Activated CD4-positive, alpha-beta memory T cell treated with anti-CD3 and anti-CD28 coated beads, Interleukin-2, amount 10 ng/mL, durations not matched to agents 7 days and 5 days (primary cell): ENCODE measurements at regions of chr1 and their contacts with region 1.

Region 1: GRCh38 chr1:184854496-184855140 is 100.0 kb upstream of the EDEM3 start:
- DNase-seq: no peak
- H3K4me3 Mint-ChIP-seq: no peak overlapping the region
- H3K27ac Mint-ChIP-seq: no peak overlapping the region
- H3K4me1 Mint-ChIP-seq: peaks cover 10% of the 10 kb centered on the region
- H3K27me3 Mint-ChIP-seq: no peaks in the 10 kb centered on the region

Region 2: GRCh38 chr1:184843732-184844495 is 10.7 kb before region 1 on chr1:
- CTCF ChIA-PET with region 1: no interaction called
- POLR2A ChIA-PET with region 1: interaction called, 10 read pairs
- DNase-seq: peak; percentile 83
- H3K4me3 Mint-ChIP-seq: no peak overlapping the region
- H3K27ac Mint-ChIP-seq: peak overlapping the region; percentile 62
- H3K4me1 Mint-ChIP-seq: peaks cover 49% of the 10 kb centered on the region
- H3K27me3 Mint-ChIP-seq: no peaks in the 10 kb centered on the region